WTC11 (cell line): ENCODE measurements at regions of chr18 and their contacts with region 1.

Region 1: GRCh38 chr18:11980555-11981382 is 538 bp upstream of the IMPA2 start:
- DNase-seq: peak; percentile 100
- ATAC-seq: peak; percentile 87
- H3K4me3 Mint-ChIP-seq: peak overlapping the region; percentile 73
- H3K27ac Mint-ChIP-seq: peak overlapping the region; percentile 97
- H3K4me1 Mint-ChIP-seq: peaks cover 52% of the 10 kb centered on the region
- H3K27me3 Mint-ChIP-seq: no peaks in the 10 kb centered on the region
- CTCF ChIP-seq: no peak

Region 2: GRCh38 chr18:11908182-11909060 is 72.3 kb before region 1 on chr18 and contains the start of gene MPPE1:
- CTCF ChIA-PET with region 1: no interaction called
- POLR2A ChIA-PET with region 1: interaction called, 10 read pairs
- DNase-seq: peak; percentile 88
- ATAC-seq: peak; percentile 82
- H3K4me3 Mint-ChIP-seq: peak within 1 kb of the TSS; percentile 88
- H3K27ac Mint-ChIP-seq: peak within 1 kb of the TSS; percentile 94
- H3K4me1 Mint-ChIP-seq: peaks cover 30% of the 10 kb centered on the region
- H3K27me3 Mint-ChIP-seq: no peaks in the 10 kb centered on the region
- CTCF ChIP-seq: no peak
- total RNA-seq, gene MPPE1: 26.4 to 30.6 TPM (median 29.1 TPM) in 3 replicates

Region 3: GRCh38 chr18:11937874-11938478 is 42.8 kb before region 1 on chr18:
- CTCF ChIA-PET with region 1: interaction called, 30 read pairs
- POLR2A ChIA-PET with region 1: interaction called, 7 read pairs
- DNase-seq: peak; percentile 78
- ATAC-seq: peak; percentile 71
- H3K4me3 Mint-ChIP-seq: no peak overlapping the region
- H3K27ac Mint-ChIP-seq: no peak overlapping the region
- H3K4me1 Mint-ChIP-seq: peaks cover 6% of the 10 kb centered on the region
- H3K27me3 Mint-ChIP-seq: no peaks in the 10 kb centered on the region
- CTCF ChIP-seq: peak; percentile 81

Region 4: DNA sequence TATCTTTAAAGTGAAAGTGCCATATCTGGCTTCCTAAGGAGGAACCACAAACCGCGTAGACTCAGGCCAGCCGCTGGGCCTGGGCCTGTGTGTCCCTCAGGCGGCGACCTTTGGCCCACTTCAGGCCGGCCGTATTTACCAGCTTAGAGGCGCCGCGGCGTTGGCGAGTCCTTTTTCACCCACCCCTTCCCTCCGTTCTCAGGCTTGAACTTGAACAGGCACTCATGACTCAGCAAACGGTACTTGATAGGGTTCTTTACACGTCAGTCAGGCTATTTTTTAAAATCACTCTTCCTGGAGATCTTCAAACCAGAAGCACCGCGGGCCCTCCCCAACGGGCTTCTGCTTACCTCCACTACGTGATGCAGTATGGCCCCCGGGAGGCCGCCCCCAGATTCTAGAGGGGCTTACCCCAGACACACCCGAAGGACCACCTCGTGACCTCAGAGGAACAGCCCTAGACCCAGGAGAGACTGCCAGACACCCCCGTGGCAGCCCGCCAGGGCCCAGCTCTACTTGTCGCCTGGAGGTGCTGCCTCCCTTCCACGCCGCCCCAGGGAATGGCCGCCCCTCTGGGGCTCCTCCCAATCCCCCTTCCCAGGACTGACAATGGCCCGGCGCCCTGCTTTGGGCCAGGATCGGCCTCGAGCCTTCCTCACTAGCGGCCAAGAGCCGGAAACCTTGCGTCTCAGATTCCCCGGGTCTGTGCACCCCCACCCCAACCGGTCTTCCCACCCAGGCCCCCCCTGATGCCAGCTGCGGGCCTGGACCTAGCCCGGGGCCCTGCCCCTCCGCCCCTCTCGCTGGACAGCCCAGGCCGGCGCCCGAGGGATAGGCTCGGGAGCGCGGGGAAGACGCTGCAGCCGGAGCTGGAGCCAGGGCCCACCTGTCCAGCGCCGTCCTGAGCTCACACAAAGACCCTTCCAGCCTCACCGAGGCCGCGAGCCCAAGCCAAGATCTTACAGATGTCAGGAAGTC is 33.3 kb before region 1 on chr18:
- CTCF ChIA-PET with region 1: interaction called, 15 read pairs
- POLR2A ChIA-PET with region 1: interaction called, 28 read pairs
- DNase-seq: peak; percentile 75
- ATAC-seq: peak; percentile 79
- H3K4me3 Mint-ChIP-seq: peak overlapping the region; percentile 89
- H3K27ac Mint-ChIP-seq: peak overlapping the region; percentile 92
- H3K4me1 Mint-ChIP-seq: peaks cover 35% of the 10 kb centered on the region
- H3K27me3 Mint-ChIP-seq: no peaks in the 10 kb centered on the region
- CTCF ChIP-seq: no peak